GM18951 (cell line): ENCODE measurements at regions of chr10 and their contacts with region 1.

Region 1: GRCh38 chr10:70549962-70550458 is 52.5 kb downstream of the PRF1 start:
- POLR2A ChIP-seq: no peak

Region 2: GRCh38 chr10:68861253-68861652 is 1688.8 kb before region 1 on chr10:
- in situ Hi-C with region 1: no loop called
- POLR2A ChIP-seq: no peak

Region 3: GRCh38 chr10:70363971-70364771 is 185.8 kb before region 1 on chr10:
- in situ Hi-C with region 1: no loop called
- POLR2A ChIP-seq: no peak

Region 4: DNA sequence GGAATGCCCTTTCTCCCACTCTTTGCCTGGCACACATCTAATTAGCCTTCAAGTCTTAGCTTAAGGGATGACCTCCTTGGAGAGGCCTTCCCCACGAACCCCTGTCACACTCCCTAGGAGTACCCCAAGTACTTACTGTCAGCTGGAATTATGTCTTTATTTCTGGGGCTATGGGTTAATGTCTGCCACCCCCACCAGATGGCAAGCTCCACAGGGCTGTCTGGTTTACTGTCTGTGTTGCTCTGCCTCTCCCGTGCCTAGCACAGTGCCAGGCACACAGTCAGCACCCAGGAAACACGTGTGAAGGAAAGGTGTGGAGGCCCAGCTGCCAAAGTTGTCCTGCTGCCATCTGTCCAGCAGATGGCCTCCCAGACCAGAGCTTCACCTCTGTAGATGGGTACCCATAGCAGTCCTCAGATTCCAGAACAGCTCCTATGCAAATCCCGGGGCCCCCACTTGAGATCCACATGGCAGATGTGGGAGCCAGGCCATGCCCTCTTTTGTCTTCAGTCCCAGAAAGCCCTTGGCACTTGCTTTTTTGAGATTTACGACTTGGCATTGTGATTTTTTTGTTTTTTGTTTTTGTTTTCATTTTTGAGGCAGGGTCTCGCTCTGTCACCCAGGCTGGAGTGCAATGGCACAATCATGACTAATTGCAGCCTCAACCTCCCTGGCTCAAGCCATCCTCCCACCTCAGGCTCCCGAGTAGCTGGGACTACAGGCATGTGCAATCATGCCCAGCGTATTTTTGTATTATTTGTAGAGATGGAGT is 88.6 kb before region 1 on chr10:
- in situ Hi-C with region 1: loop called (anchors 10 kb)
- POLR2A ChIP-seq: no peak

Region 5: GRCh38 chr10:70682920-70683600 is 133.1 kb after region 1 on chr10:
- in situ Hi-C with region 1: no loop called
- POLR2A ChIP-seq: no peak

Region 6: DNA sequence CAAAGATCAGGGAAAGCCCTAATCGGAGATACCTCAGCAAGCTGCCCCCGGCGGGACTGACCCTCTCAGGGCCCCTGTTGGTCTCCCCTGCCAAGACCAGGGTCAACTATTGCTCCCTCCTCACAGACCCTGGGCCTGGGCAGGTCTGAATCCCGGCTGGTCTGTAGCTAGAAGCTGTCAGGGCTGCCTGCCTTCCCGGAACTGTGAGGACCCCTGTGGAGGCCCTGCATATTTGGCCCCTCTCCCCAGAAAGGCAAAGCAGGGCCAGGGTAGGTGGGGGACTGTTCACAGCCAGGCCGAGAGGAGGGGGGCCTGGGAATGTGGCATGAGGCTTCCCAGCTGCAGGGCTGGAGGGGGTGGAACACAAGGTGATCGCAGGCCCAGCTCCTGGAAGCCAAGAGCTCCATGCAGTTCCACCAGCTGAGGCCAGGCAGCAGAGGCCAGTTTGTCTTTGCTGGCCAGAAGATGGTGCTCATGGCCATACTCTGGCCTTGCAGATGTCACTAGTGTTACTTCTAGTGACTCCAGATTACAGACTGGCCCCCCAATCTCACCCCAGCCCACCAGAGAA is 211.1 kb after region 1 on chr10:
- in situ Hi-C with region 1: loop called (anchors 5 kb)
- POLR2A ChIP-seq: no peak

Region 7: GRCh38 chr10:70874045-70874444 is 324.0 kb after region 1 on chr10:
- in situ Hi-C with region 1: loop called (anchors 5 kb)
- POLR2A ChIP-seq: no peak

Region 8: DNA sequence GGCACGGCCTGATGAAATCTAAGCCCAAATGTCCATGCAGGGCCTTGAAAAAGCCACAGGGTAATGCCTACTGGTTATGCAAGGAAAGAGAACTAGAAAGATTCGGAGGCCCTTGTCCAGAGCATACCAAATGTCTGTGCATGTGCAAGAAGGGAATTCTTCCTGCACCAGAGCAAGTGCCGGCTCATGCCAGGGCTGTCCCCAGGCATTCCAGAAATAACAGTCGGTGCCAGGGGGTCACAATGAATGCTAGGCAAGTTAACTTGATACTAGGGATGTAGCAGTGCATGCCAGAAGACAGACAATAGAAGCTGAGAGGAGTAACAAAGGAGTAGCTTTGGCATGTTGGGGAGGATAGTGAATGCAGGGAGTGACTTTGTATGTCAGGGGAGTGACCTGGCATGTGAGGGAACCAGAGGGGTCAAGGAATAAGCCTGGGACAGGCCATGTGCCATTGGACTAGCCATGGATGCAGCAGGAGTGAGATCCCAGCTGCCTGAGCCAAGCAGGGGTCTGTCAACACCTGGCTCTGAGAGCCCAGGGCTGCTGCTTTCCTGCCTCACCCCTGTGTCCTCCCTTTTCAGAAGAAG is 542.9 kb after region 1 on chr10:
- in situ Hi-C with region 1: no loop called
- POLR2A ChIP-seq: no peak